Activated T-helper 2 cell treated with anti-CD3 and anti-CD28 coated beads, Interferon-gamma antibody, Interleukin-2, Interleukin-4, amounts not matched to agents 10 μg/mL and 5 μg/mL and 100 μg/mL, durations not matched to agents 14 hours and 24 hours and 36 hours (primary cell): ENCODE measurements at regions of chr6 and their contacts with region 1.

Region 1: DNA sequence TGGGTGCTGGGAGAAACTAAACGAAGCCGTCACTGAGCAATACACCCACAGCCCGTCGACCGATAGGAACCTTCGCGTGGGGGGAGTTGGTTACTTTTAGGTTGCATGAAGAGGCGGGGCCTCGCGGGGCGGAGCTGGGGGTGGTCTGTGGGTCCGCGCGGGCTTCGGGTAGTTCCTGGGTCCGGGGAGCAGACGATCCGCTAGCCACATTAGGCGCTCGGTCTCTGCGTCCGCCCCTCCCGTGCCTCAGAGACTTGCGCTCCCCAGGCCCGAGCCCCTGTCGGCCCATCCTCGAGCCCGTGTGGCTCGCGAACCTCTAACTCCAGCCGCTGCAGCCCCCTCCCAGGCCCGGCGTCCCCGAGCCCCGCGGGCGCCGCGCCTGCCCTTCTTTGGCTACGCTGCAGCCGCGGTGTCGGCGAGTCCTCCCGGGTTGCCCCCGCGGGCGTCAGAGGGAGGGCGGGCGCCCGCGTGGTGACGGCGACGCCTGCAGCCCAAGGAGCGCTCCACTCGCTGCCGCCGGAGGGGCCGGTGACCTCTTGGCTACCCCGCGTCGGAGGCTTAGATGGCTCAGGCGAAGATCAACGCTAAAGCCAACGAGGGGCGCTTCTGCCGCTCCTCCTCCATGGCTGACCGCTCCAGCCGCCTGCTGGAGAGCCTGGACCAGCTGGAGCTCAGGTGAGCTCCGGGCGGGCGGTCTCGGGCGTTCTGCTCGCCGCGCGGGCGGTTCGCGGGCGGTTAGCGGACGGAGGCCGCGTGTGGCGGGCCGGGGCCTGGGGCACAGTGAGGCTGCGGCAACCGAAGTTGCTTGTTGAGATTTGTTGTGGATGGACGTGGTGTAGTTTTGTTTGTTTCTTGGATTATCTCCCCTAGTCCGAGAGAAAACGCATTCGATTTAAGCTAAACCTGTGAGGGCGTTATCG is at the start of gene BAG2:
- DNase-seq: peak; percentile 92
- H3K4me3 Mint-ChIP-seq: peak within 1 kb of the TSS; percentile 97
- H3K27ac Mint-ChIP-seq: peak within 1 kb of the TSS; percentile 93
- H3K4me1 Mint-ChIP-seq: peaks cover 25% of the 10 kb centered on the region
- H3K27me3 Mint-ChIP-seq: no peaks in the 10 kb centered on the region
- total RNA-seq, gene BAG2: 13.6 and 14.3 TPM in 2 replicates

Region 2: DNA sequence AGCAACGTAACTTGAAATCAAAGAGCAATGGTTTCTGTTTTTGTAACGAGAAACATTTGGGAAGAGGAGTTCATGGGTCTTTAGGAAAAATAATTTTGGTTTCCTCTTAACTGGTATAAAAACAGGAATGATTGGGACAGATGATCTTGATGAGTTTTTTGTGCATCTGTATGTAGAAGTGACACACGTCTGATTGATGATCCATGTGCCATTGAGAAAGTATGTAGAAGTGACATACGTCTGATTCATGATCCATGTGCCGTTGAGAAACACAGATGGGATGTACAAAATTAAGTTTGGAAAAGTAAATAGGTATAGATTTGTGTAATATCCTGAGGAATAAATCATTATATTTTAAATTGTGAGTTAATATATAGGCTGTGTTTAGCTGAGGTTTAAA is 123.8 kb before region 1 on chr6:
- intact Hi-C with region 1: loop called (anchors 1 kb)
- DNase-seq: no peak
- H3K4me3 Mint-ChIP-seq: peak overlapping the region; percentile 79
- H3K27ac Mint-ChIP-seq: peak overlapping the region; percentile 24
- H3K4me1 Mint-ChIP-seq: peaks cover 26% of the 10 kb centered on the region
- H3K27me3 Mint-ChIP-seq: peaks cover 20% of the 10 kb centered on the region

Region 3: DNA sequence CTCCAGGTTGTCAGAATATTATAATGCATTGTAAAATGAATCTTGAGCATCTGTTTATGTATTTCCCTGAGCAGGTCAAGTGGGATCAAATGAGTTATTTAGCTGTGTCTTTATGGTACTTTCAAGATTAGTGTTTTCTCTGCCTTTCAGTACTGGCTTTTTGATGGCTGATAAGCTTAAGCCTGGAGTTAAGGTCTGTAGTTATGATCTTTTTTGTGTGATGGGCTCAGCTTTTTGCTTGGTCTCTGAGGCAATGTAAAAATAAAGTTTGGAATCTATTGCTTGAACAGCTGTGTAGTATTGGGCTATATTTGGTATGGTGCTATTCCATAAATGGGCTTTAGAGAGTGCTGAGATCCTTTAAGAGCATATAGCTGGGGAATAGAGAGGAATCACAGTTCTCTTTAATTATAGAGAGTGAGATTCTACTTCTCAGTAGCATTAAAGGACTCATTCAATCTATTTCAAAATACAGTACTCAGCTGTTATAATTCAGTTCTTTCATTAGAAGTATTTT is 41.7 kb before region 1 on chr6:
- intact Hi-C with region 1: no loop called
- DNase-seq: no peak
- H3K4me3 Mint-ChIP-seq: no peak overlapping the region
- H3K27ac Mint-ChIP-seq: no peak overlapping the region
- H3K4me1 Mint-ChIP-seq: peaks cover 14% of the 10 kb centered on the region
- H3K27me3 Mint-ChIP-seq: no peaks in the 10 kb centered on the region

Region 4: DNA sequence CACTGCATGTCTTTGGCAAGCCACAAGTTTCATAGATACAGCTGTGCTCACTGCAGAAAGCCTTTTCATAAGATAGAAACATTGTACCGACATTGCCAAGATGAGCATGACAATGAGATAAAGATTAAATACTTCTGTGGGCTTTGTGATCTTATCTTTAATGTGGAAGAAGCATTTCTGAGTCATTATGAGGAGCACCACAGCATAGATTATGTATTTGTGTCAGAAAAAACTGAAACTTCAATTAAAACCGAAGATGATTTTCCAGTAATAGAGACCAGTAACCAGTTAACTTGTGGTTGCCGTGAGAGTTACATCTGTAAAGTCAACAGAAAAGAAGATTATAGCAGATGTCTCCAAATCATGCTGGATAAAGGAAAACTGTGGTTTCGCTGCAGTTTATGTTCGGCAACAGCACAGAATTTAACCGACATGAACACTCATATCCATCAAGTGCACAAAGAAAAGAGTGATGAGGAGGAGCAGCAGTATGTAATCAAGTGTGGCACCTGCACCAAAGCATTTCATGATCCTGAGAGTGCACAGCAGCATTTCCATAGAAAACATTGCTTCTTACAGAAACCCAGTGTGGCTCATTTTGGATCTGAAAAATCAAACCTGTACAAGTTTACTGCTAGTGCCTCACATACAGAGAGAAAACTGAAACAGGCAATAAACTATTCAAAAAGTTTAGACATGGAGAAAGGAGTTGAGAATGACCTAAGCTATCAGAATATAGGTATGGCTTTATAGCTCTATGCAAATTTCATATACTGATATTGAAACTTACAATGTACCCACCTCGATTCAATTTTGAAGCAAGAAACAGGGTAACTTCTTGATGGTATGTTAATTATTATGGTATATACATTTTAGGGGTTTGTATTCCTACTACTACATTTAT is 24.2 kb before region 1 on chr6:
- intact Hi-C with region 1: loop called (anchors 1 kb)
- DNase-seq: peak; percentile 25
- H3K4me3 Mint-ChIP-seq: peak overlapping the region; percentile 65
- H3K27ac Mint-ChIP-seq: peak overlapping the region; percentile 93
- H3K4me1 Mint-ChIP-seq: peaks cover 37% of the 10 kb centered on the region
- H3K27me3 Mint-ChIP-seq: no peaks in the 10 kb centered on the region

Region 5: GRCh38 chr6:57207141-57207540 is 34.7 kb after region 1 on chr6:
- intact Hi-C with region 1: loop called (anchors 2 kb)
- DNase-seq: no peak
- H3K4me3 Mint-ChIP-seq: no peak overlapping the region
- H3K27ac Mint-ChIP-seq: no peak overlapping the region
- H3K4me1 Mint-ChIP-seq: peaks cover 27% of the 10 kb centered on the region
- H3K27me3 Mint-ChIP-seq: no peaks in the 10 kb centered on the region